Caco-2 (cell line): ENCODE measurements at regions of chr2 and their contacts with region 1.

Region 1: DNA sequence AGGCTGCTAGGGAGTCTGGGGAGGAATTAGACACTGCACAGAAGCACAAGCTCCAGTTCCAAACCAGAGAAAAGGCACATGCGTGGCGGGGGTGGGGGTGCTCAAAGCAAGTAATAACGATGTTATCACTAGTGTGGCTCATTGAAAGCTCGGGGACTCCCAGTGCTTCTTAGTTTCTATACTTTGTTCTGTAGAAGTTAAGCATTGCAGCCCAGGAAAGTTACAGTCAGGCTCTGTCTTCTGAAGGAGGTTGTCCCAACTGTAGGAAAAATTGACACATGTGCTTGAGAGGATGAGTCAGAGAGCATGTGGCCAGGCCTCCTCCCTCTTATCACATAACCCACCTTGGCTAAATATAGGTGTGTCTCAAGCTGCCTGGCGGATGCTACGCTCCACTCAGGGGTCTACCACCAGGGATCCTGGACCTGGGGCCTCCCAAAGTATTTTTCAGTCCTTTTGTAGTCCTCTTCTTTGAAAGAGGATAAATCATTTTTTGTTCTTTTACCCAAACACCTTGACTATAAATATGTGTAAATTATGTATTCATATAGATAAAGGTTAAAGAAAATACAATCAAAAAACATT is 3.8 kb downstream of the GALNT5 start:
- DNase-seq: peak; percentile 72 to 87
- H3K4me3 ChIP-seq: peak overlapping the region; percentile 19
- H3K4me3 Mint-ChIP-seq: peak overlapping the region; percentile 68
- H3K27ac Mint-ChIP-seq: peak overlapping the region; percentile 83
- H3K4me1 ChIP-seq: peaks cover 50% of the 10 kb centered on the region
- H3K4me1 Mint-ChIP-seq: peaks cover 50% of the 10 kb centered on the region
- H3K27me3 ChIP-seq: no peaks in the 10 kb centered on the region
- H3K27me3 Mint-ChIP-seq: no peaks in the 10 kb centered on the region
- CTCF ChIP-seq: no peak

Region 2: GRCh38 chr2:157245846-157246764 is 15.2 kb before region 1 on chr2:
- CTCF ChIA-PET with region 1: interaction called, 3 read pairs
- POLR2A ChIA-PET with region 1: no interaction called
- intact Hi-C with region 1: loop called (anchors 1 kb)
- DNase-seq: no peak
- H3K4me3 ChIP-seq: no peak overlapping the region
- H3K4me3 Mint-ChIP-seq: peak overlapping the region; percentile 26
- H3K27ac Mint-ChIP-seq: peak overlapping the region; percentile 76
- H3K4me1 ChIP-seq: peaks cover 23% of the 10 kb centered on the region
- H3K4me1 Mint-ChIP-seq: peaks cover 20% of the 10 kb centered on the region
- H3K27me3 ChIP-seq: no peaks in the 10 kb centered on the region
- H3K27me3 Mint-ChIP-seq: no peaks in the 10 kb centered on the region
- CTCF ChIP-seq: no peak

Region 3: DNA sequence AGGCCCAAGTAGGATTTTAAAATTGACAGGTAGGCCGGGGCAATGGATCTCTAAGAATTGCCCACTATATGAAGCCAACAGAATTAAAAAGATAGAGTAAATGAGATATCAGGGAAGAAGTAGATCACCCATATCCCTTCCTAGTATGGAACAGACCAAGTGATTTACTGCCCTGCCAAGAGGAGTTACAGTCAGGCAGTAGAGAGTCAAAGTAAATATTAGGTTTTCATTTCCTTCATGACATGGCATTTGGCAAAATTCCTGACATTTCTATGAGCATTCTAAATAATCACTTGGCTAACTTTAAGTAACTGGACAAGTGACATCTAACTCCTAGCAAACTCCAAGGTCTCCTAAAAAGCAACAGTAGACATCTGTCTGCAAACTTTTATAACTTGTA is 29.7 kb after region 1 on chr2:
- CTCF ChIA-PET with region 1: no interaction called
- POLR2A ChIA-PET with region 1: no interaction called
- intact Hi-C with region 1: loop called (anchors 2 kb)
- DNase-seq: peak in 1 of 2 experiments; percentile 30
- H3K4me3 ChIP-seq: no peak overlapping the region
- H3K4me3 Mint-ChIP-seq: no peak overlapping the region
- H3K27ac Mint-ChIP-seq: no peak overlapping the region
- H3K4me1 ChIP-seq: peaks cover 36% of the 10 kb centered on the region
- H3K4me1 Mint-ChIP-seq: peaks cover 28% of the 10 kb centered on the region
- H3K27me3 ChIP-seq: no peaks in the 10 kb centered on the region
- H3K27me3 Mint-ChIP-seq: no peaks in the 10 kb centered on the region
- CTCF ChIP-seq: no peak

Region 4: GRCh38 chr2:157327621-157328500 is 66.6 kb after region 1 on chr2:
- CTCF ChIA-PET with region 1: interaction called, 3 read pairs
- POLR2A ChIA-PET with region 1: no interaction called
- intact Hi-C with region 1: loop called (anchors 2 kb)
- DNase-seq: peak; percentile 84 to 85
- H3K4me3 ChIP-seq: no peak overlapping the region
- H3K4me3 Mint-ChIP-seq: no peak overlapping the region
- H3K27ac Mint-ChIP-seq: no peak overlapping the region
- H3K4me1 ChIP-seq: peaks cover 37% of the 10 kb centered on the region
- H3K4me1 Mint-ChIP-seq: peaks cover 11% of the 10 kb centered on the region
- H3K27me3 ChIP-seq: no peaks in the 10 kb centered on the region
- H3K27me3 Mint-ChIP-seq: no peaks in the 10 kb centered on the region
- CTCF ChIP-seq: peak; percentile 92 to 96

Region 5: DNA sequence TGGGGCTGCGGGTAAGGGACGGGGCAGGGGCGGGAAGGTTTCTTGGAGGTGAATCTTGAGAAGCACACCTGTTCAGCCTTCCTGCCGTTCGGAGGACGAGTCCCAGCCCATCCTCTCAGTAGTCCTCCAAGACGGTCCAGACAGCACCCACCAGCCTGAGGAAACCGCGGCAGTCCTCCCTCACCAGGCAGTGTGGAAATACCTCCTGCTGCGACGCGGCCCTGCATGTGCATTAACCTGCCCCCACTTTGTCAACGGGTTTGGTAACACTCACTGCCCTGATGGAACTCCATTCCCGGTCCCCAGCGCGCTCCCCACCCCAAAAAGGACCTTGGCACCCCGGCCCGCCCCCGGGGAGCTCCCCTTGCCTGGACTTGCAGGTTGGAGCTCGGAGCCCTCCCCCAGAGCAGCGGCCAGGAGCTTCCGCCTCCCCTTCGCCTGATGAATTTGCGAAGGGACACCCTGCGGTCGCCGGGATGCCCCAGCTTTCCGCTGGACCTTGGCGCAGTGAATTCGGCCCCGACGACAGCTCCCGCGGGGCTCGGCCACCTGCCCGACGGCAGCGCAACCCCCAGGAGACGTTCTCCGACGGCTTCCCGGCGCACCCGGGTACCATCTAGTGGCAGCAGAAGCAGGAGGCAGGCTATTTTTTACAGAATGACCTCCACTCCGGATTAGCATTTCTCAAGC is 335.8 kb after region 1 on chr2:
- CTCF ChIA-PET with region 1: no interaction called
- POLR2A ChIA-PET with region 1: no interaction called
- intact Hi-C with region 1: no loop called
- DNase-seq: peak in 1 of 2 experiments; percentile 8
- H3K4me3 ChIP-seq: no peak overlapping the region
- H3K4me3 Mint-ChIP-seq: no peak overlapping the region
- H3K27ac Mint-ChIP-seq: no peak overlapping the region
- H3K4me1 ChIP-seq: no peaks in the 10 kb centered on the region
- H3K4me1 Mint-ChIP-seq: no peaks in the 10 kb centered on the region
- H3K27me3 ChIP-seq: no peaks in the 10 kb centered on the region; the same call in 1 of the 2 replicates
- H3K27me3 Mint-ChIP-seq: peaks cover 19% of the 10 kb centered on the region
- CTCF ChIP-seq: peak in 1 of 2 experiments; percentile 16